Activated naive CD4-positive, alpha-beta T cell treated with anti-CD3 and anti-CD28 coated beads, Interleukin-2, amount 10 ng/mL, durations not matched to agents 7 days and 5 days (primary cell): ENCODE measurements at regions of chr2 and their contacts with region 1.

Region 1: GRCh38 chr2:68734688-68735525 is at the start of gene ARHGAP25:
- DNase-seq: peak; percentile 77
- H3K4me3 Mint-ChIP-seq: no peak within 1 kb of the TSS
- H3K27ac Mint-ChIP-seq: no peak within 1 kb of the TSS
- H3K4me1 Mint-ChIP-seq: peaks cover 41% of the 10 kb centered on the region
- H3K27me3 Mint-ChIP-seq: no peaks in the 10 kb centered on the region

Region 2: DNA sequence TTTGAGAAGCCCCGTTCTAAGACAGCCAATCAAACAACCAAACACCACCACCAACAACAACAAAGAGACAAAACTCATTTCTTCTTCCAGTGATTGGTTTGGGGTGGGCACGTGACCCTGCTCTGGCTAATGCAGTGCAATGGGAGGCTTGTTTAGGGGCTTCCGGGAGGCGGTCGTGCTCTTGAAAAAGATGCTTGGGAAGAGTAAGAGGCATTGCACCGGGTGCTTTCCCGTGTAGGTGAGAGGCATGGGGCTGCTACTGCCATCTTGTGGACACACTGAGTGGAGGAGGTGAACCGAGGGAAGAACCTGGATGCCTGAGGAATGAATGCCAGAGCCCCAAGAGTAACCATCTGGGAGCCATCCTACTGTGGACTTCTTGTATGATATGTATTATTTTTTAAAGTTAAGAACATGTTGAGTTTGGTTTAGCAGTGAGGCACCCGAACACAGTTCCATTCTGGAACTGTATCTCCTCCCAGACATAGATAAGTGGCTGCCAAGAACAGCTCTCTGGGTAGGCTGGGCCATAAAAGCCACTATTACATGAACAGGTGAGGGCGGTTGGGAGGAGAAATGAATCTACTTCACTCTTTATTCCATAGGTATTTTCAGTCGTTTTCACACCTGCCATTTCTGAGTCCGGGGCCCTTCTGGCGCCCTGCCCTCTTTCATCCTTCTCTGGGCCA is 19.4 kb before region 1 on chr2:
- CTCF ChIA-PET with region 1: interaction called, 34 read pairs
- DNase-seq: peak; percentile 38
- H3K4me3 Mint-ChIP-seq: no peak overlapping the region
- H3K27ac Mint-ChIP-seq: peak overlapping the region; percentile 84
- H3K4me1 Mint-ChIP-seq: peaks cover 81% of the 10 kb centered on the region
- H3K27me3 Mint-ChIP-seq: no peaks in the 10 kb centered on the region

Region 3: GRCh38 chr2:68721482-68722101 is 13.3 kb before region 1 on chr2:
- CTCF ChIA-PET with region 1: interaction called, 34 read pairs
- DNase-seq: peak; percentile 67
- H3K4me3 Mint-ChIP-seq: peak overlapping the region; percentile 50
- H3K27ac Mint-ChIP-seq: peak overlapping the region; percentile 95
- H3K4me1 Mint-ChIP-seq: peaks cover 99% of the 10 kb centered on the region
- H3K27me3 Mint-ChIP-seq: no peaks in the 10 kb centered on the region